ENCODE measurements at regions of chr10 and their contacts with region 1.

Region 1: DNA sequence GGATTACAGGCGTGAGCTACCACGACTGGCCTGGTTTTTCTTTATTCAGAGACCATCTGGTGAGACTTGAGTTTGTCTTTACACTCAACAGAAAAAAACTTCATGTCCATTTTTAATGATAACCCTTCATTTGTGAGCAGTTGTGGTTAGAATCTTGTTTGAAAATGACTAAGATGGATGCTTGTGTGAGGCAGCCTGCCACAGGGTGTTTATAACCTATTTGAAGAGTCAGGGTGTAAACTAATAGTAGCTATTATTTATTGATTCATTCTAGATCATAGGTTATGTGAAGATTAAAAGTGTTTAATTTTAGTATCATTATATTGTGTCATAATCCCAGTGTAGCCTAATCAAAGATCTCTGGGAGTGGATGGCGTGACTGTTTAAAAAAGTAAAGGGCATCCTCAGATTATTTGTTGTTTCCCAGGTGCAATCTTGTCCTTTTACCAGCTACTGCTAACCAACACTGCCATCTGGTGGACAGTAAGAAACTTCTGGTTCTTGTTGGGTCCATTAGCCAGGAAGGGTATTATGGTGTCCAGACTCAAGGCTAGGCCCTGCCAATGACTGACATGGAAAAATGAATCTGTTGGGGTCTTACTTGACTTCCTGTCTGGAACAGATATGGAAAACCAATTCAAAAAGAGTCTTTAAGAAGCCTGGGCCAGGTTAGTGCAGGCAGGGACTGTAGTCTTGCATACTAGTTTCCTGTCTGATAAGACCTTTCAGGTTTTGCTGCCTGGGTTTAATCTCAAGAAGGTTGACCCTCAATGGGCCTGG is 24.9 kb downstream of the NRBF2 start:
- DNase-seq: no peak
- H3K4me3 ChIP-seq: no peak overlapping the region
- H3K27ac ChIP-seq: no peak overlapping the region
- H3K4me1 ChIP-seq: no peaks in the 10 kb centered on the region
- H3K27me3 ChIP-seq: no peaks in the 10 kb centered on the region
- CTCF ChIP-seq: peak; percentile 69 to 82

Region 2: DNA sequence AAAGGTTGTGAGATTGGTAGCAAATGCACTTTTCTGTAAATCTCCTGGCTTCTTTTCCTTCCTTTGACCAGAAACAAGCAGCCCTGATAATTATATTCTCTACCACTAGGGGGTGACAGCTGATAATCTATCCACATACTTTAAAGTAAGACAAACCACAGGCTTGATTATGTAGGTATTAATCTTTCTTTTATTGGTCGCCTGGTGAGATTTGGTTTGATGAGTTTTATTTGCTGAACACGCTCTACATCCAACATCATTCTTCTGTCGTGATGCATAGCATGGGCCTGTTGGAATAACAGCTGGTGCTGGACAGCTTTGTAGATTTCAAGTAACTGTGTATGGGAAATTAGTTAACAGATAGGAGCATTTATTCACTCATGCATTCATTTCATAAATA is 720.3 kb before region 1 on chr10:
- intact Hi-C with region 1: loop called (anchors 5 kb)
- DNase-seq: no peak
- H3K4me3 ChIP-seq: no peak overlapping the region
- H3K27ac ChIP-seq: no peak overlapping the region
- H3K4me1 ChIP-seq: peaks cover 0 to 23% (median 8%) of the 10 kb centered on the region in 4 donors
- H3K27me3 ChIP-seq: no peaks in the 10 kb centered on the region
- CTCF ChIP-seq: peak; percentile 74 to 82

Region 3: GRCh38 chr10:62594093-62594520 is 563.9 kb before region 1 on chr10:
- intact Hi-C with region 1: loop called (anchors 5 kb)
- DNase-seq: peak; percentile 58 to 72
- H3K4me3 ChIP-seq: no peak overlapping the region
- H3K27ac ChIP-seq: no peak overlapping the region
- H3K4me1 ChIP-seq: no peaks in the 10 kb centered on the region
- H3K27me3 ChIP-seq: no peaks in the 10 kb centered on the region
- CTCF ChIP-seq: peak; percentile 86 to 87